Gastrocnemius medialis (tissue), 4 donors: ENCODE measurements at regions of chr3 and their contacts with region 1.

Region 1: GRCh38 chr3:29280404-29281093 is at the start of gene RBMS3:
- DNase-seq: peak; percentile 85 to 88
- ATAC-seq: peak; percentile 62 to 64
- H3K4me3 ChIP-seq: peak within 1 kb of the TSS; percentile 67 to 83 (median 72)
- H3K27ac ChIP-seq: peak within 1 kb of the TSS; percentile 83 to 90 (median 89)
- H3K4me1 ChIP-seq: peaks cover 22 to 27% of the 10 kb centered on the region in 2 donors
- H3K27me3 ChIP-seq: no peaks in the 10 kb centered on the region
- CTCF ChIP-seq: peak; percentile 16 to 61 (median 28)
- POLR2A ChIP-seq: peak; percentile 38 to 72
- total RNA-seq, gene RBMS3: 16.1 to 38.8 (median 22.7) TPM

Region 2: GRCh38 chr3:28348629-28349483 is 931.7 kb before region 1 on chr3 and contains the starts of genes AZI2 and ZCWPW2:
- in situ Hi-C with region 1: no loop called
- intact Hi-C with region 1: loop called (anchors 10 kb)
- DNase-seq: peak; percentile 95 to 97
- ATAC-seq: peak; percentile 87 to 91
- H3K4me3 ChIP-seq: peak within 1 kb of the TSS; percentile 76 to 98 (median 92)
- H3K27ac ChIP-seq: peak within 1 kb of the TSS; percentile 94 to 100 (median 98)
- H3K4me1 ChIP-seq: peaks cover 44 to 48% of the 10 kb centered on the region in 2 donors
- H3K27me3 ChIP-seq: no peaks in the 10 kb centered on the region
- CTCF ChIP-seq: peak in 3 of 5 experiments; percentile 18 to 38 (median 34)
- POLR2A ChIP-seq: peak; percentile 93
- total RNA-seq, gene AZI2: 27.6 to 90.9 (median 59.2) TPM
- total RNA-seq, gene ZCWPW2: 0.55 to 1.6 (median 1.3) TPM in 3 of 4 donors, not detected in the other

Region 3: GRCh38 chr3:28745916-28746617 is 534.5 kb before region 1 on chr3:
- in situ Hi-C with region 1: no loop called
- intact Hi-C with region 1: loop called (anchors 10 kb)
- DNase-seq: peak; percentile 37 to 46
- ATAC-seq: peak; percentile 72 to 90
- H3K4me3 ChIP-seq: no peak overlapping the region
- H3K27ac ChIP-seq: peak overlapping the region; percentile 79 to 92 (median 90)
- H3K4me1 ChIP-seq: peaks cover 52 to 54% of the 10 kb centered on the region in 2 donors
- H3K27me3 ChIP-seq: no peaks in the 10 kb centered on the region
- CTCF ChIP-seq: no peak
- POLR2A ChIP-seq: no peak

Region 4: GRCh38 chr3:29525254-29525881 is 244.8 kb after region 1 on chr3:
- in situ Hi-C with region 1: loop called in 2 of 4 experiments (anchors 10 kb)
- intact Hi-C with region 1: loop called (anchors 5 kb)
- DNase-seq: peak; percentile 60 to 74
- ATAC-seq: peak; percentile 92 to 93
- H3K4me3 ChIP-seq: no peak overlapping the region
- H3K27ac ChIP-seq: peak overlapping the region; percentile 58 to 75 (median 68)
- H3K4me1 ChIP-seq: peaks cover 18 to 26% of the 10 kb centered on the region in 2 donors
- H3K27me3 ChIP-seq: no peaks in the 10 kb centered on the region
- CTCF ChIP-seq: no peak
- POLR2A ChIP-seq: no peak

Region 5: GRCh38 chr3:29642393-29643033 is 362.0 kb after region 1 on chr3:
- in situ Hi-C with region 1: no loop called
- intact Hi-C with region 1: loop called (anchors 5 kb)
- DNase-seq: peak; percentile 61 to 67
- ATAC-seq: peak; percentile 99
- H3K4me3 ChIP-seq: peak overlapping the region in 3 of 4 donors; percentile 3 to 26 (median 13)
- H3K27ac ChIP-seq: peak overlapping the region; percentile 82 to 85 (median 83)
- H3K4me1 ChIP-seq: peaks cover 58 to 66% of the 10 kb centered on the region in 2 donors
- H3K27me3 ChIP-seq: no peaks in the 10 kb centered on the region
- CTCF ChIP-seq: no peak
- POLR2A ChIP-seq: peak; percentile 12 to 25

Region 6: DNA sequence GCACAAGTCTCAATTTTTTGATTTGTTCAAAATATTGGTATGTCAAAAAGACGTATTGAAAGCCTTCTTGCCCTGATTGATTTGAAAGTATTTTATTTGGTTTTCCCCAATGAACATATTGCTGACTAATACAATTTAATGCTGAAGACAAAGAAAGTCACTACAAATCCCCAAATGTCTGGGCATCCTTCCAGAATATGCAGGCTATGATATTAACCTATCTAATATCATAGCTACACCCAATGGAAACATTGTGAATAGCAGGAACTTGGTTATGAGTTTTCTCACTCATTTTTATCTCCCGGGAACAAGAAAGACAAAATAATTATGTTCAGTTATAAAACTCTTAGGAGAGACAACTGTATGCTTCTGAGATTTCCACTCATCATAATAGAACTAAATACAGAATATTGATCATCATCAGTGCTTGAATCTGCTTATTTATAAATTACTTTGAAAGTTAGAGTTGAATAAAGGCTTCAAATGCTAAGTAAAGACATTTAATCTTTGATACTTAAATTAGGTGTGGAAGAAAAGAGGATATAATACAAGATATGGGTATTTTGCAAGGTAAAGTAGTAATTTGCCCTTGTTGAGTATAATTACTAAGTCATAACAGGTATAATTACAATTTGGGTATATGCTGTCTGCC is 484.2 kb after region 1 on chr3:
- in situ Hi-C with region 1: loop called in 3 of 4 experiments (anchors 25 kb)
- intact Hi-C with region 1: loop called (anchors 5 kb)
- DNase-seq: no peak
- ATAC-seq: peak in 1 of 2 donors; percentile 50
- H3K4me3 ChIP-seq: no peak overlapping the region
- H3K27ac ChIP-seq: no peak overlapping the region
- H3K4me1 ChIP-seq: peaks cover 10 to 12% of the 10 kb centered on the region in 2 donors
- H3K27me3 ChIP-seq: no peaks in the 10 kb centered on the region
- CTCF ChIP-seq: peak; percentile 15 to 60 (median 35)
- POLR2A ChIP-seq: no peak